ENCODE measurements at regions of chr14 and their contacts with region 1.

Region 1: DNA sequence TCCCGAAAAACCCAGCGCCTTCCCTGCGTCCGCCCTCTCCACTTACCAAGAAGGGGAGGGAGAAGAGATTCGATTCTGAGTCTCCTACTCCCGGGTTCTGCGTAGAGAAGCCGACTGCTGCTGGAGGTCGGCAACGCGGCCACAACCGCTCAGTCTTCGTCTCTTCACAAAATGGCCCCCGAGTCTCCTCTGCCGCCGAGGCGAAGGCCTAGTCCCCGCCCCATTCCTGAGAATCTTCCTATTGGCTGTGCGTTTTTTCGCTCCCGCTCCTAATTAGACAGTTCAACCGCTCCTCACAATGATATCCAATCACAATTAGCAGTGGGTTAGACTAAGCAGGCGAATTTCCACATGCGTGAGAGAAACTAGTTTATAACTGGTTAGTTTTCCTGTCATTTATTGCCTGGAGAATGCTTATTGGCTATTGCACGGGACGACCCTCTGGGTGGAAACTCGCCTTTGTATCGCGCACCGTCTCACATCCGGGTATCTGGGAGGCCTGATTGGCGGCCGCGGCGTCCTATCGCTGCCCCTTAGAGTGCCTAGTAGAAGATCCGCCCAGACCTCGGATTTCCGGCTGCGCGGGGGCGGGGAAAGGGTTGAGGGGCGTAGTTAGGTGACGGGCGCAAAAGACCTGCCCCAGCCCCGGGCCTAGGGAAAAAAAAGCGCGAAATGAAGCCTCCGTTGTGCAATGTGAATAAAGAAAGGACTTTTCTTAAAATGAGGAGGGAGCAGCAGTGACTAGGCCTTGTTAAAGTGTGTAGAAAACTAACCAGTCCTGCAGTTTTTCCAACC is at the start of gene HNRNPC:
- DNase-seq: peak; percentile 100
- H3K4me3 Mint-ChIP-seq: peak within 1 kb of the TSS; percentile 90
- H3K27ac Mint-ChIP-seq: peak within 1 kb of the TSS; percentile 99
- H3K4me1 Mint-ChIP-seq: peaks cover 12% of the 10 kb centered on the region
- H3K27me3 Mint-ChIP-seq: no peaks in the 10 kb centered on the region
- CTCF ChIP-seq: no peak
- total RNA-seq, gene HNRNPC: 882 and 1,027 TPM in 2 replicates

Region 2: GRCh38 chr14:21241218-21241819 is 28.1 kb before region 1 on chr14:
- CTCF ChIA-PET with region 1: interaction called, 9 read pairs
- POLR2A ChIA-PET with region 1: interaction called, 38 read pairs
- intact Hi-C with region 1: no loop called
- DNase-seq: peak; percentile 34
- H3K4me3 Mint-ChIP-seq: no peak overlapping the region
- H3K27ac Mint-ChIP-seq: peak overlapping the region; percentile 27
- H3K4me1 Mint-ChIP-seq: peaks cover 14% of the 10 kb centered on the region
- H3K27me3 Mint-ChIP-seq: no peaks in the 10 kb centered on the region
- CTCF ChIP-seq: peak; percentile 36

Region 3: DNA sequence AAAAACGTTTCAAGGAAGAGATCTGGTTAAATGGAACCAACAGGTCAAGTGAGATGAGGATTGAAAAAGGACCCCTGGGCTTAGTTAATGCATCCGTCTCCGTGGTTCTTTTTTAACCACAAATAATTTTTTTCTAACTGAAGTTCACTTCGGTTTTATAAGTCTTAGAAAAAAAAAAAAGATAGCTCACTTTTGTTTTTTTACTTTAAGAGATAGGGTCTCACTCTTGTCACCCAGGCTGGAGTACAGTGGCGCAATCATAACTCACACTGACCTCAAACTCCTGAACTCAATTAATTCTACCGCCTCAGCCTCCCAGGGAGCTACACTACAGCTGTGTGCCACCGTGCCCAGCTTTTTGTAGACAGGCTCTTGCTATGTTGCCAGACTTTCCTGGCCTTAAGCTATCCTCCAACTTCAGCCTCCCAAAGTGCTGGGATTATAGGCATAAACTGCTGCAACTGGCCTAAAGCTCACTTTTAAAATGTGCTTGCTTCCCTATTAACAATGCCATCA is 12.0 kb before region 1 on chr14:
- CTCF ChIA-PET with region 1: interaction called, 5 read pairs
- POLR2A ChIA-PET with region 1: interaction called, 82 read pairs
- intact Hi-C with region 1: no loop called
- DNase-seq: no peak
- H3K4me3 Mint-ChIP-seq: peak overlapping the region; percentile 18
- H3K27ac Mint-ChIP-seq: no peak overlapping the region
- H3K4me1 Mint-ChIP-seq: peaks cover 47% of the 10 kb centered on the region
- H3K27me3 Mint-ChIP-seq: no peaks in the 10 kb centered on the region
- CTCF ChIP-seq: no peak

Region 4: GRCh38 chr14:21383848-21384493 is 114.5 kb after region 1 on chr14 and contains the start of gene SUPT16H:
- CTCF ChIA-PET with region 1: interaction called, 4 read pairs
- POLR2A ChIA-PET with region 1: interaction called, 23 read pairs
- intact Hi-C with region 1: loop called (anchors 2 kb)
- DNase-seq: peak; percentile 95
- H3K4me3 Mint-ChIP-seq: peak within 1 kb of the TSS; percentile 100
- H3K27ac Mint-ChIP-seq: peak within 1 kb of the TSS; percentile 99
- H3K4me1 Mint-ChIP-seq: peaks cover 8% of the 10 kb centered on the region
- H3K27me3 Mint-ChIP-seq: no peaks in the 10 kb centered on the region
- CTCF ChIP-seq: no peak
- total RNA-seq, gene SUPT16H: 97.0 and 98.3 TPM in 2 replicates

Region 5: DNA sequence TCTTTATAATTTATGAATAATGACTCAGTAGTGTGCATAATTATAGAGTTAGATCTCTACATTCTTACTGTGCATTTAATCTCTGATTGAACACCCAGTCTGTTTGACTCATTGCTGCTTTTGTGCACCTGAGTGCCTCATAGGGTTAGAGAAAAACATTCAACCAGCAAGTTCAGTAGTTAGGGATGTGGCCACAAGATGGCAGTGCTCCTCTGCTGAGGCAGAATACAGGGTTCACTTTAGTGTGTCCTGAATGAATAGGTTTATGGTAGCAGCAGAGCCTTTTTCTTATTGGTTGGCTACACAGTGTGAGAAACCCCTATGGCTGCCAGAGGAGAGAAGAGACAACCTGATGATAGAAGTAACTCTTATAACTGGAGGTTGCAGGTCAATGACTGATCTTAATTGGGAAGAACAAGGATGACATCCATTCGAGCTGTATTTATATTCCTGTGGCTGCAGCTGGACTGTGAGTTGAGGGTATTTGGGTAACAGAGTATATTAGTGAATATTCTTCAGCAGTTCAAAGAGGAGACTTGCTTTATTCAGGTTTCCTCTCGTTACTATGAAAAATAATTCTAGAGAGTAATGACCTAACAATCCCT is 599.1 kb after region 1 on chr14:
- CTCF ChIA-PET with region 1: no interaction called
- POLR2A ChIA-PET with region 1: no interaction called
- intact Hi-C with region 1: no loop called
- DNase-seq: peak; percentile 65
- H3K4me3 Mint-ChIP-seq: no peak overlapping the region
- H3K27ac Mint-ChIP-seq: no peak overlapping the region
- H3K4me1 Mint-ChIP-seq: peaks cover 13% of the 10 kb centered on the region
- H3K27me3 Mint-ChIP-seq: peaks cover 43% of the 10 kb centered on the region
- CTCF ChIP-seq: peak; percentile 70

Measured in MCF 10A (cell line).